ENCODE measurements at regions of chr5 and their contacts with region 1.

Region 1: DNA sequence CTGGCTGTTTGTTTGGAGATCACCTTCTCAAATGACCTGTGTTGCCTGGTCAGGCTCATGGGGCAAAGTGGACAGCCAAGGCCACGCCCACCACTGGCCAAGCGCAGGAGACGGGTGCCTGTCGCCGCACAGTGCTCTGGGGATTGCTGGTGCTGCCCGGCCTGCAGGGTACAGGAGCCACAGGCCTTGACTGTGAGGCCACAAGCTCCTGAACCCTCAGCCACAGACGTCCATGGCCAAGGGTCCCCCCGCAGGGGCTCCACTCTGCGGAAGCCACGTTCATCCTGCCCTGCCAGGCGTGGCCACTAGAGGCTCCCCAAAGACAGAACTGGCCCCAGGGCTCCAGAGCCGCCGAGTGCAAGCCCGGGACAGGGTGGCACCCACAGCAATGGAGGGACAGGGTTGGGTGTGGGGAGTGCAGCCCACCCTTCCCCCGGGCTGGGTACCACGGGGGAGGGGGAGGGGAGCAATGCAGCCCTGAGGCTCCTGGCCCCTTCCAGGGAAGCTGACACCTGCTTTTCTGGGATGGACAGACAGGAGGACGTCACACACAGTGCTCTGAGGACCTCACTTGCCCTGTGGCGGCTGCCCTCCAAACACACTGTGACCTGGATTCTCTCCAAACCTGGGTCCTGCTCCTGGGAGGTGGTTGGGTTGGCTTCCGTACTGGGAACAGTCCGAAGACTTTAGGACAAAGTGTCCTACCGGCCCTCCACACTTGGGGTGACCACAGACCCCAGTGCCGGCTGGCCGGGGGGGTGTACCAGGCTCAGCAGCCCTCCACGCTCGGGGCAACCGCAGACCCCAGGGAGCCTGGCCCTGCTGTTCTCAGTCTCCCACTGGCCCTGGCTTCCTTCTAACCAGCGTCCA is 21.5 kb downstream of the TPPP start:
- DNase-seq: peak; percentile 52 to 94
- H3K4me3 ChIP-seq: peak overlapping the region; percentile 34; the same call in 1 of the 2 replicates
- H3K27ac ChIP-seq: no peak overlapping the region
- H3K4me1 ChIP-seq: peaks cover 27% of the 10 kb centered on the region
- H3K27me3 ChIP-seq: no peaks in the 10 kb centered on the region
- CTCF ChIP-seq: peak; percentile 100

Region 2: DNA sequence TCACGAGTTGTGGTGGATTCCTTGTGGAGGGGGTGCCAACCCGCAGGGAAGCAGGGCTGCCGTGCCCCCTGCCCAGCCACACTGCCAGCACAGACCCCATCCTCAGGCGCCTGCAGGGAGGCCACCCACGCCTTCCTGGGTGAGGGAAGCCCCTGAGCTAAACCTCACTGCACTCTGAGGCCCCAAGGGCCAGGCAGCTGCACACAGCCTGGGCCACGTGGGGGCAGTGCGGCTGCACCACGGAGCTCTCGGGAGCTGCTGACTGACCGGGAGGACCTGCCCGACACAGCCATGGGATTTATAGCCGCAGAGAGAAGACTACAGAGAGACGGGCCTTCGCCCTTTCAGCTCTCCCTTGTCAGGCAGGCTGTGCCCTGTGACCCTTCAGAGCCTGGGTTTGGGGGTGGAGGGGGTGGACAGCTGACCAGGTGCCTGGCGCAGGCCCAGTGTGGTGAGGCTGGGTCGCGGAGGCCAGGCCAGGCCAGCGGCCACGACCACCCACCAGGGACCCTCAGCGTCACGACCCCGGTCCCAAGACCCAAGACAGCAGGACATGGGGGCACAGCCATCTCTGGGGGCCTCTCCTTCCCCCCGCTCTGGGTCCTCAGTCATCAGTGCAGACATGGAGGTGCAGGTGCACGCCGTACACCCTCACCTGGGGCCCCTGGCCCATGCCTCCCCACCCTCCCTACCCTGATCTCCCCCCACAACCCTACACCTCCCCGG is 354.4 kb before region 1 on chr5:
- CTCF ChIA-PET with region 1: no interaction called
- POLR2A ChIA-PET with region 1: no interaction called
- intact Hi-C with region 1: loop called (anchors 1 kb)
- DNase-seq: peak in 1 of 2 experiments; percentile 89
- H3K4me3 ChIP-seq: no peak overlapping the region
- H3K27ac ChIP-seq: no peak overlapping the region
- H3K4me1 ChIP-seq: no peaks in the 10 kb centered on the region
- H3K27me3 ChIP-seq: no peaks in the 10 kb centered on the region
- CTCF ChIP-seq: peak; percentile 69

Region 3: DNA sequence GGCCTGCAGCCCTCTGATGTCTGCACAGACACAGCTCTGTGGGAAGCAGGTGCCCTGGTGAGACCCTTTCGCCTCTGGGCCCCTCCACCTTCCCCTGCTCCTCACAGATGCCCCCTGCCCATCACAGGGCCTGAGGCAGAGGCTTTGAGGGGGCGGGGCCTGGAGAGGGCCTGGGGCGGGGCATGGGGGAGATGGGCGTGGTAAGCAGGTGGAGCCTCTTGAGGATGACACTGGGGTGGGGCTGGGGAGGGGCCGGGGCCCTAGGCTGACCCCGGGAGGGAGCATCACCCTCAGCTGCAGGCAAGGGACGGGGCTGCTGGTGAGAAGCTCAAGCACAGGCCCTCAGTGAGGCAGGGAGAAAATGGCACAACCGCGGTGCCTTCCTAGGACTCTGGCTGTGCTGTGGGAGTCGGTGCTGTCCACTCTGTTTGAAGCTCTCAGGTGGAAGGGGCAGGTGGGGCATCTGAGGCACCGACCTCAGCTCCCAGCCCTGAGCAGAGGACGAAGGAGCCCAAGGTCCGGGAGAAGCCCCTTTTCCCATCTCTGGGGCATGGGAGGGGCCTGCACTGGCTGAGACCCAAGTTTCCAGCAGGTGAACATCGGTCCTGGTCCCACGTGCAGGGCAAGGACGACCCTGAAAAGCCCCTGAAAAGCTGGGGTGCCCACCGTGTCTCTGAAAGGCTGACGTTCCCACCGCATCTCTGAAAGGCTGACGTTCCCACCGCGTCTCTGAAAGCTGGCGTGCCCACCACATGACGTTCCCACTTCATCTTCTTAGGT is 130.0 kb before region 1 on chr5:
- CTCF ChIA-PET with region 1: interaction called, 11 read pairs
- POLR2A ChIA-PET with region 1: no interaction called
- intact Hi-C with region 1: no loop called
- DNase-seq: no peak
- H3K4me3 ChIP-seq: no peak overlapping the region
- H3K27ac ChIP-seq: no peak overlapping the region
- H3K4me1 ChIP-seq: no peaks in the 10 kb centered on the region
- H3K27me3 ChIP-seq: peaks cover 96% of the 10 kb centered on the region
- CTCF ChIP-seq: no peak

Region 4: DNA sequence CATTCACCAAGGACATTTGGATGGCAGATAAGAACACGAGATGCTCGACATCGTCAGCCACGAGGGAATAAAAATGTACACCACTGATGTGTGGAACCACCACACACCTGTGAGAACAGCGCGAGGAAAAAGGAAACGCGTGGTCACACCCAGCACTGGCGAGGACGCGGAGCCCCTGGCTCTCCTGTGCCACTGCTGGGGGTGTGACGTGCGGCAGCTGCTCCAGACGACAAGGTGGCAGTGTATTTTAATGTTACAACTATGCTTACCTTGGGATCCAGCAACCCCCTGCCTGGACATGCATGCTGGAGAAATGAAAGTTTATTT is 73.2 kb before region 1 on chr5:
- CTCF ChIA-PET with region 1: no interaction called
- POLR2A ChIA-PET with region 1: no interaction called
- intact Hi-C with region 1: no loop called
- DNase-seq: no peak
- H3K4me3 ChIP-seq: no peak overlapping the region
- H3K27ac ChIP-seq: no peak overlapping the region
- H3K4me1 ChIP-seq: no peaks in the 10 kb centered on the region
- H3K27me3 ChIP-seq: peaks cover 98% of the 10 kb centered on the region
- CTCF ChIP-seq: no peak

Region 5: DNA sequence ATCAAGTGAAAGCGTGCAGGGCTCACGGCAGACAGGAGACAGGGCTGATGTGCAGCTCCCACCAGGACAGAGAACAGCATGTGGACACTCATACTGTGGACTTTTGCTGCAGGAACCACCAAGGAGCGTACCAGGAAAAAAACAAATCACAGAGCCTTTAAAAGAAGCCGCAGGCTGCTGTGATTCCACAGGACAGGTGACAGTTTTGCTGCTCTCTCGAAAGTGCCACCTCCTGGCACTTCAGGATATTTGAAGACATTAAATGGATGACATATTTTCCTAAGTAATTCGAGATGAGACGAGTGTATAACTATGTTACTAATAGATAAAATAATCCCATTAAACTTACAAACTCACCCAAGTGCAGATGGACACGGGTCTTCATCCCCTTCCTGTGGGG is 149.8 kb after region 1 on chr5:
- CTCF ChIA-PET with region 1: no interaction called
- POLR2A ChIA-PET with region 1: no interaction called
- intact Hi-C with region 1: loop called (anchors 10 kb)
- DNase-seq: peak in 1 of 2 experiments; percentile 34
- H3K4me3 ChIP-seq: no peak overlapping the region
- H3K27ac ChIP-seq: no peak overlapping the region
- H3K4me1 ChIP-seq: no peaks in the 10 kb centered on the region
- H3K27me3 ChIP-seq: peaks cover 81% of the 10 kb centered on the region
- CTCF ChIP-seq: no peak; the same call in 1 of the 2 replicates

Region 6: DNA sequence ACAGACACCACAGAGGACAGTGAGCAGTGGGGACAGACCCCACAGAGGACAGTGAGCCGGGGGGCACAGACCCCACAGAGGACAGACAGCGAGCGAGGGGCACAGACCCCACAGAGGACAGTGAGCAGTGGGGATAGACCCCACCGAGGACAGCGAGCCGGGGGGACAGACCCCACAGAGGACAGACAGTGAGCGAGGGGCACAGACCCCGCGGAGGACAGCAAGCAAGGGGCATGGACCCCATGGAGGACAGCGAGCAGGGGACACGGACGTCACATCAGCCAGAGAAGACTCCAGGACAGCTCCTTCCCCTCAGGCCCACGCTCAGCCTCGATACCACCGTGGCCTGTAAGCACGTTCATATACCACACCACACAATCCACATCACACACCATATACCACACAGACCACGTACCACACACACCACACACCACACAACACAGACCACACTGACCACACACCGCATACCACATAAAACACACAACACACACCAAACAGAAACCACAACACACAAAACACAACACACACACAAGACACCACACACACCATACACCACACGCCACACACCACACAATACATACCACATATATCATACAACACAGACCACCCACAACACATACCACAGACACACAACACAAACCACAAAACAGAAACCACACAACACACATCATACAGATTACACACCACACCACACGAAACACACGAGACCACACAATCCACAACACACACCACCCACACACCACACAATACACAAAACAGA is 184.3 kb after region 1 on chr5:
- CTCF ChIA-PET with region 1: no interaction called
- POLR2A ChIA-PET with region 1: no interaction called
- intact Hi-C with region 1: no loop called
- DNase-seq: no peak
- H3K4me3 ChIP-seq: no peak overlapping the region
- H3K27ac ChIP-seq: no peak overlapping the region
- H3K4me1 ChIP-seq: no peaks in the 10 kb centered on the region
- H3K27me3 ChIP-seq: peaks cover 12% of the 10 kb centered on the region
- CTCF ChIP-seq: no peak

Region 7: GRCh38 chr5:902129-902916 is 230.6 kb after region 1 on chr5:
- CTCF ChIA-PET with region 1: no interaction called
- POLR2A ChIA-PET with region 1: no interaction called
- intact Hi-C with region 1: loop called (anchors 2 kb)
- DNase-seq: no peak
- H3K4me3 ChIP-seq: no peak overlapping the region
- H3K27ac ChIP-seq: no peak overlapping the region
- H3K4me1 ChIP-seq: no peaks in the 10 kb centered on the region
- H3K27me3 ChIP-seq: no peaks in the 10 kb centered on the region
- CTCF ChIP-seq: no peak

Region 8: DNA sequence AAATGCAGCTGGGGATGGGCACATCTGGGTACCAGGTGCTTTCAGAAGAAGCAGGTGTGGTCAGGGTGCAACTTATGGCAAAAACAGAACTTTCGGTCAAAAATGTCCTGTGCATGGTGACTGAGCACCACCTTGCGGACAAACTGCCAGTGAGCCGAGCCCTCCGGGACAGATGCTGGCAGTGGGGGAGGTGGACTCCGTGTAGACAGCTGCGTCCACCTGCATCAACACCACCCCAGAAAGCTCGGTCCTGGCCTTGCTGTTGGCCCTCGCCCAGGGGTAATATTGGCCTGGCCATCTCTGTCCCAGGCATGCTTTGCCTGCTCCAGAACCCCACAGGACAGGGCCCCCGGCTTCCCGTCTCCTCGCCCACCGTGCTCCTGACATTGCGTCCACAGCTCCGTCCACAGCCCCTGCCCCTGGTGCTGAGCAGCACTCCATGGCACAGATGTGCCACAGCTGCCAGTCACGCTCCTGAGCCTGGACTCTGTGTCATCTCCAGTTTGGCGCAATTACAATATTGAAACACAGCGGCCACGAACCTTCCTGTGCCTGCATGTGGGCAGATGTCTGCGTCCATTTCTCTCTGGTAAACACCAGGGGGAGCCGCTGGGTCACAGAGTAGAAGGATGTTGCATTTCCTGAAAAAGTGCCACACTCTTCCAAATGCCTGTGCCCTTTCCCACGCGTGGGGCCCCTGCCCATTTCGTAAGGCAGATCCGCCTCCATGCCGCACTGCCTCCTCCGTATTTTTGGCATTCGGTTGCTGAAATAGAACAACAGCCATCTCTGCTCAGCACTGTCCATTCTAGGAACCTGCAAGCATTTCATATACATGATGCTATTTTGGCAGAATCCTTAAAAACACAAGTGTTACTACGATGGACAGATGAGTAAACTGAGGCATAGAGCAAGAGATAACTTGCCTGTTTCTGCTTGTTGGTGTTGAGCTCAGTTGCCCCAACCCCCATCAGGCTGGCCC is 496.3 kb after region 1 on chr5:
- CTCF ChIA-PET with region 1: no interaction called
- POLR2A ChIA-PET with region 1: no interaction called
- intact Hi-C with region 1: loop called (anchors 1 kb)
- DNase-seq: peak; percentile 62 to 87
- H3K4me3 ChIP-seq: no peak overlapping the region
- H3K27ac ChIP-seq: no peak overlapping the region
- H3K4me1 ChIP-seq: no peaks in the 10 kb centered on the region
- H3K27me3 ChIP-seq: peaks cover 42% of the 10 kb centered on the region
- CTCF ChIP-seq: peak; percentile 89

Region 9: GRCh38 chr5:1659100-1659981 is 987.6 kb after region 1 on chr5:
- CTCF ChIA-PET with region 1: no interaction called
- POLR2A ChIA-PET with region 1: no interaction called
- intact Hi-C with region 1: no loop called
- DNase-seq: no peak
- H3K4me3 ChIP-seq: no peak overlapping the region
- H3K27ac ChIP-seq: no peak overlapping the region
- H3K4me1 ChIP-seq: no peaks in the 10 kb centered on the region
- H3K27me3 ChIP-seq: peaks cover 94% of the 10 kb centered on the region
- CTCF ChIP-seq: no peak

Measured in PC-9 (cell line).